Activated T-helper 1 cell treated with anti-CD3 and anti-CD28 coated beads, Interleukin-12 subunit alpha, Interleukin-12 subunit beta, Interleukin-2, Interleukin-4 antibody, amounts not matched to agents 30 ng/mL and 10 ng/mL and 1 ng/mL, durations not matched to agents 14 hours and 24 hours and 36 hours (primary cell): ENCODE measurements at regions of chr3 and their contacts with region 1.

Region 1: DNA sequence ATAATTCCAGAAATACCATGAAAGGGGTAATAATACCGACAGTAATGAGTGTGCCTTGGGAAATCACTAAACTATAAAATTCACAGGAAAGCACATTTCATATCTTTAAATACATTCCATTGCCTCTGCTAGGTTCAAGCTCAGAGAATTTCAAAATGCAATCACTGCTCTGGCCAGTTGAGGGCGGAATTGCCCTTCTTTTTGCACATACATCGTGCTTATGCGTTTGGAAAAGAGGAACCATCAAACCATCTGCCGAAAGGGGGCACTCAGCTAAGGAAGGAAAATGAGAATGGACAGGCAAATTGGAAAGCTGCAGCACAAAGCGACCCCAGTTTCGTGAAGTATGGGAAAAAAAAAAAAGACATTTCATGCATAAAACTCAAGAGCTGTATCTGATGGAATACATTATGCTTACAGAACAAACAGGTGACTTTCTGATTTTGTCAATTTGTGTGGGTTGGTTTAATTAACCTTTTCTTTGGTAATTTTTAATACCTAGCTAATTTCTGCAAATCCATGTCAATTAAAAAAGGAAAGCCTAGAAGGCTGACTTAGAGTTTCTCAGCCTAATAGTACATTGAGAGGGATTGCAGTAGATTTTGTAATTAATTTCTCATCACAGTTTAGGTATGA is 61.4 kb downstream of the TUSC7 start:
- DNase-seq: peak; percentile 6
- H3K4me3 Mint-ChIP-seq: no peak overlapping the region
- H3K27ac Mint-ChIP-seq: no peak overlapping the region
- H3K4me1 Mint-ChIP-seq: no peaks in the 10 kb centered on the region
- H3K27me3 Mint-ChIP-seq: no peaks in the 10 kb centered on the region

Region 2: DNA sequence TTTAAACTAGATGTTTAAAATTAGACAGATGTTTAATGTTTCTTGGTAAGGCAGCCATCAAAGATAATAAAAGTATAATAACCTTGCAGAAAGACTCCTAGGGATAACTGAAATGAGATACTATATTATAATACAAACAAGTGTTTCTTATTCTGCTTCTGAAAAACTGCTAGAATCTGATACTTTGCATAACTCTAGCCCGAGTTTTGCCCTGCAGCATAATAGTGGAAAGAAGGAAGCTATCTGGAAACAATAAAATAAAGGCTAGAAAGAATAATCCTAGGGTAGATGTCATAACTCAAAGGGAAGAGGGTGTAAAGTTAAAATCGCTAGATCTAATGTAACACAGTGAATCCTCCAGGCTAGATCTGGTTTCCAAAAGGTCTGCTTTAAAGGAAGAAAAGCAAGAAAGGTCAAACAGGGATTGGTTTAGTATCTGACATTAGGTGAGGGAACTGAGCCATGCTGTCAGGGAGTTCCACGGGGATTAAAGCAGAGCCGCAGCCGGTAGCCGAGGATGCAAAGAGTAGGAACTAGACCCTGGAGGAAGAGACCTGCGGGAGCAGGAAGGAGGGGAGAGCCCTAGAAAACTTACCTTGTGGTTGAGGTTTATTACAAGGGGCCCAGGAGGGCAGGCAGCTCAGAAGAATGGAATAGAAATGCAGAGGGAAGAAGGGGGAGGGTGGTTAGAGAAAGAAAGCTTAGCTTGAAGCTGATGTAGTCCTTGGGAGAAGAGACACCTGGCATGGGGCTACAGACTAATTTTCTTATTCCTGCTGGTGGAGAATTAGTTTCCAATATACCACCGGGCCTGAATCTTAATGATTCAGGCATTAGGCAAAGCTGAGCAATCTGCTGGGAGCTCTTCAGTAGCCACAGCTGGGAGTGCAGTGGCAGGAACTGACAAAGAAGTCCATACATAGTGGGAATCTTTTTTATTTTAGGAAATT is 107.5 kb before region 1 on chr3:
- intact Hi-C with region 1: no loop called
- DNase-seq: no peak
- H3K4me3 Mint-ChIP-seq: no peak overlapping the region
- H3K27ac Mint-ChIP-seq: no peak overlapping the region
- H3K4me1 Mint-ChIP-seq: no peaks in the 10 kb centered on the region
- H3K27me3 Mint-ChIP-seq: no peaks in the 10 kb centered on the region

Region 3: DNA sequence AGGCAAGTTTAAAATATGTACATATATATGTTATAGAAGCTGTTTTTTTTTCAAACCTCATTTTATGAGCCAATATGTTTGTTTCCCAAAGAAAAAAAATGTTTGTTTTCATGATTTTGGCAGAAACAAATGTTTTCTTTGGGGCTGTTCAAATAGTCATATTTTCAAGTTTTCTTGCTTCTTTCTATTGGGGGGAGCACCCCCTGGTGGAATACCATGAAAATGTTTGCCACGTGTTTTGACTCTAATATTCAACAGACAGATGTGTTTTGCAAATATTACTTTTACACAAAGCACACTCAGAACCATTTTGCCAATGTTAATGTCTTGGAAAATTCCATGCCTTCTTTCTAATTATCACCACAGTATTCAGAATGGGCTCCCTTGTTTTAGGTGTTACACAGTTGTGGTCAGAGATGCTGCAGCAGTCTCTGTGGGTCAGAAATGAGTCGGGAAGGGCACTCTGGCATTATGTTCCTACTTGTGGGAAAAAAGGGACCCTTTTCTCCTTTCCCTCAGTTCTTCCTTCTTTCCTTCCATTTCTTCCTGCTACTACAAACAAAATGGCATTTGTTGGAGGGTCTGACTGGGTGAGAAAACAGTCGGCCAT is 755.6 kb after region 1 on chr3:
- intact Hi-C with region 1: loop called (anchors 2 kb)
- DNase-seq: no peak
- H3K4me3 Mint-ChIP-seq: no peak overlapping the region
- H3K27ac Mint-ChIP-seq: no peak overlapping the region
- H3K4me1 Mint-ChIP-seq: no peaks in the 10 kb centered on the region
- H3K27me3 Mint-ChIP-seq: no peaks in the 10 kb centered on the region

Region 4: DNA sequence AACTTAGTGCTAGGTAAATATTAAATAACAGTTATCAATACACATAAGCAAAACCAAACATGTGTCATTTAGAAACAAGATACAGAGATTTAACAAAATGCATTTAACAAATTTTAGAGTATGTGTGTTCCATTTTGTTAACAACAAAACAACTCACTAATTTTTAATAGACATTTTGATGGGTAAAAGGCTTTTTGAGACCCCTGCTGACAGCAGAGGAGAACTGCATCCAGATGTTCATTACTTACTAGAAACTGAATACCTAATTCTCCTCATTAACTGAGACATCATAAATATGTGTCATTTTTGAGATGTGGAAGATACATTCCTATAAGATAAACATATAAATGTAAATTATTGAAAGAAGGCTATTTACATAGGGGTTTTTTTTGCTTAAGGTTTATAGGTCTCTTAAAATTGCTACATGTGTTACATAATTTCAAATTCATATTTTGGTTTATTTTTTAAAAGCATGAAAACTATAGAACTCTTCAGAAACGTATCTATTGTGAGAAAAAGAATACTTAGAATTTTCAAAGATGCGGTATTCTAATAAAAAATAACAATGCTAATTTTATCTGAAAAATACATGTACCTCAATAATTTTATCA is 948.5 kb after region 1 on chr3:
- intact Hi-C with region 1: loop called (anchors 2 kb)
- DNase-seq: no peak
- H3K4me3 Mint-ChIP-seq: no peak overlapping the region
- H3K27ac Mint-ChIP-seq: no peak overlapping the region
- H3K4me1 Mint-ChIP-seq: no peaks in the 10 kb centered on the region
- H3K27me3 Mint-ChIP-seq: no peaks in the 10 kb centered on the region